Activated naive CD4-positive, alpha-beta T cell treated with anti-CD3 and anti-CD28 coated beads for 36 hours (primary cell): ENCODE measurements at regions of chr2 and their contacts with region 1.

Region 1: GRCh38 chr2:3461801-3462492 is 57.4 kb downstream of the ADI1 start:
- DNase-seq: peak; percentile 66
- H3K4me3 Mint-ChIP-seq: no peak overlapping the region
- H3K27ac Mint-ChIP-seq: peak overlapping the region; percentile 79
- H3K4me1 Mint-ChIP-seq: peaks cover 13% of the 10 kb centered on the region
- H3K27me3 Mint-ChIP-seq: no peaks in the 10 kb centered on the region

Region 2: DNA sequence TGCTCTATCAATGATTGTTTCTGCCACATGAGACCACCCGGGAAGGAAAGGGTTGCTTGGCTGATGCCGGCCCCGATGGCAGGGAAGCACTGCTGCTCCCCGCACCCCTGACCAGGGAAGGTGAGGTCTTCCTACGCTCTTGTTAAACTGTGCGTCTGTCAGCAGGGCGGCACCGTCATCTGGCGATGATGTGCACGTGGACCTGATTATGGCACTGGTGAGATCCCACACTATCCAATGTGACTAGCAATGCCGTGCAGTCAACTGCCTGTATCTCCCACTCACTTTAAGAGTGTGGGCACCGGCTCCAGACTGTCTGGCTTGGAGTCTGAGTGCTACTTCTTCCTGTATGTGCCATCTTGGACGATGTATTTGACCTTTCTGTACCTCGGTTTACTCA is 1340.1 kb before region 1 on chr2:
- CTCF ChIA-PET with region 1: no interaction called
- intact Hi-C with region 1: loop called (anchors 2 kb)
- DNase-seq: no peak
- H3K4me3 Mint-ChIP-seq: no peak overlapping the region
- H3K27ac Mint-ChIP-seq: no peak overlapping the region
- H3K4me1 Mint-ChIP-seq: peaks cover 4% of the 10 kb centered on the region
- H3K27me3 Mint-ChIP-seq: peaks cover 3% of the 10 kb centered on the region

Region 3: DNA sequence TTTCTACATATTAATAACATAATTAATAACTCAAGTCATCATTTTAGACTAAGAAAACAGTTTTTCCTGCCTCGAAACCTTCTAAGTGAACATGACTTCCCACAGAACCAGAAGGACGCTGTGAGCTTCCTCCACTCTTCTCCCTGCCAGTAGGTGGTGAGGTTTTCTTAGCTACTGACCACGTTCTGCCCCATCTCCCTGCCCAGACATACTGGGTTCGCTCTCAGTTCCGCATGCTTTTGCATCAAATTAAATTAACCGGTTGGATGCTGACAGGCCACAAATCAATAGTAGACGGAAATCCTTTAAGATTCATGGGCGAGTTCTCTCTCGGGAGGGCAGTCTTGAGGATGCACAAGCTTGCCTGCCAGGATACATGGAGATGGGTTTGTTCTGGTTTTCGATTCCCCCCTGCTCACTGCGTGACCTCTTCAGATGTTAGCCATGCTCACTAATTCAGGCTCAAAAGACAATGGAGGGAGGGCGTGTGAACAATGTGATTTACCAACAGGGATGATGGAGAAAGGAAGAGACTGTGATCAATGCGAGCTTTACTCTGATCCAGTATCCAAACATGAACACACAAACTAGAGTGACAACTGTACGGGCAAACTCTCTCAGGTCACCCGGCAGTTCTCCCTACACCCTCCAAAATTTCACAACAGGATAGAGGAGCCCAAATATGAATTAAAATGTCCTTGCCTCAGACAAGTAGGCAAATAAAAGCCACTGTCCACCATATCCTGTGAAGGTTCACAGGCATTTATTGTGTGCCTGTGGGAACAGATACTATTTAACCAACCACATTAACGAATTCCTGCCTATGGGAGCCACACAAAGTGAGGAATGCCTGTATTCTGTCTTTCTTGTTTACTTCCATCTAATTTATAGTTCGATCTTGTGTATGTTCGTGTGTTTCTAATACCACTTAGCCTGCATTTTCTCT is 460.1 kb before region 1 on chr2:
- CTCF ChIA-PET with region 1: no interaction called
- intact Hi-C with region 1: loop called (anchors 5 kb)
- DNase-seq: no peak
- H3K4me3 Mint-ChIP-seq: no peak overlapping the region
- H3K27ac Mint-ChIP-seq: no peak overlapping the region
- H3K4me1 Mint-ChIP-seq: peaks cover 3% of the 10 kb centered on the region
- H3K27me3 Mint-ChIP-seq: peaks cover 30% of the 10 kb centered on the region

Region 4: DNA sequence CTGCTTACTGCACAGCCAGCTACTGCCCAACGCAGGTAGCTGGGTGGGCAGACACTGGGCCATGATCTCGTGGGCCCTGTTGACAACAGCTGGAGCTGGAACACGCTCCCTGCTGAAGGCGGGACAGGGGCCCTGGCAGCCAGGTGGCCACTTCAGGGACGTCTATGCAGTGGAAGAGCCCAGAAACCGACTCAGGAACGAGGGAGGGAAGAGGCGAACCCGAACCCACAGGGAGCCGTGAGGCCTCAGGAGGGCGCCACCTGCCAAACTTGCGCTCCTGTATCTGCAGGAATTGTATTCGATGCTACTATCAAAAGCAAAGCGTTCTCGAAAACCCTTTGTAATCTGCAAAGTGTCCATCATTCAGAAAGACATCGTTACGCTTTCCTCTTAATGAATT is 282.7 kb before region 1 on chr2:
- CTCF ChIA-PET with region 1: no interaction called
- intact Hi-C with region 1: loop called (anchors 10 kb)
- DNase-seq: peak; percentile 60
- H3K4me3 Mint-ChIP-seq: no peak overlapping the region
- H3K27ac Mint-ChIP-seq: no peak overlapping the region
- H3K4me1 Mint-ChIP-seq: no peaks in the 10 kb centered on the region
- H3K27me3 Mint-ChIP-seq: no peaks in the 10 kb centered on the region

Region 5: GRCh38 chr2:3423492-3424175 is 38.3 kb before region 1 on chr2:
- CTCF ChIA-PET with region 1: interaction called, 44 read pairs
- intact Hi-C with region 1: loop called (anchors 1 kb)
- DNase-seq: peak; percentile 86
- H3K4me3 Mint-ChIP-seq: no peak overlapping the region
- H3K27ac Mint-ChIP-seq: no peak overlapping the region
- H3K4me1 Mint-ChIP-seq: no peaks in the 10 kb centered on the region
- H3K27me3 Mint-ChIP-seq: no peaks in the 10 kb centered on the region

Region 6: DNA sequence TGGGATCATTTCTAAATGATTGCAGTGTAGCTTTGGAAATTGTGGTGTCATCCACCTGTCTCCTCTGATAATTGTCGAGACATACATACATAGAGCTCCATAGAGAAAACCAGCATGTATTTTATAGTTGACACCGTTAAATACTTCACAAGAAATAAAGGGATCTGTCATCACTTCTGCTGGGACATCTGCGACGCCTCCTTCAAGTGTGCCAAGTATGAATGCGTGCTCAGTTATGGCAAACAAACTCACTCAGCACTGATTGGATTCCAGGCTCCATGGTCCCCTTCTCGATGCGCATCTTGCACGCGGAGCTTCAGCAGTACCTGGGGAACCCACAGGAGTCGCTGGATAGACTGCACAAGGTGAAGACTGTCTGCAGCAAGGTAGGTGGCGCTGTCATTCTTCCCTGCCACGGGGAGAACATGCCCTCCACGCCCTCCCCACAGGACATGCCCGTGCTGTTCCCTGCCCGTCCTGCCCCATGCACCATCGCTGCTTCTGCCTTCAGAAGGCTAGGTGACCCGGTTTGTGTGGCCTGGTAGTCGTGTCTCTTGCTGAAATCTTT is 18.4 kb before region 1 on chr2:
- CTCF ChIA-PET with region 1: interaction called, 10 read pairs
- intact Hi-C with region 1: no loop called
- DNase-seq: no peak
- H3K4me3 Mint-ChIP-seq: no peak overlapping the region
- H3K27ac Mint-ChIP-seq: no peak overlapping the region
- H3K4me1 Mint-ChIP-seq: peaks cover 14% of the 10 kb centered on the region
- H3K27me3 Mint-ChIP-seq: no peaks in the 10 kb centered on the region